Sigmoid colon (tissue), 7 donors: ENCODE measurements at regions of chr6 and their contacts with region 1.

Region 1: GRCh38 chr6:52577022-52577777 is at the start of gene TRAM2:
- DNase-seq: peak; percentile 92
- H3K4me3 ChIP-seq: peak within 1 kb of the TSS; percentile 63 to 91 (median 77)
- H3K27ac ChIP-seq: peak within 1 kb of the TSS; percentile 94 to 98 (median 97)
- H3K4me1 ChIP-seq: peaks cover 0 to 50% (median 44%) of the 10 kb centered on the region in 4 donors
- H3K27me3 ChIP-seq: no peaks in the 10 kb centered on the region
- CTCF ChIP-seq: peak in 1 of 4 experiments; percentile 17
- EP300 ChIP-seq: no peak
- POLR2A ChIP-seq: peak in 1 of 2 donors; percentile 19
- total RNA-seq, gene TRAM2: 9.6 to 15.0 (median 12.4) TPM

Region 2: GRCh38 chr6:52284460-52285176 is 292.6 kb before region 1 on chr6 and contains the start of gene MCM3:
- intact Hi-C with region 1: loop called (anchors 10 kb)
- DNase-seq: peak; percentile 99
- H3K4me3 ChIP-seq: peak within 1 kb of the TSS; percentile 62 to 88 (median 69)
- H3K27ac ChIP-seq: peak within 1 kb of the TSS; percentile 70 to 76 (median 75)
- H3K4me1 ChIP-seq: peaks cover 0 to 17% (median 12%) of the 10 kb centered on the region in 4 donors
- H3K27me3 ChIP-seq: no peaks in the 10 kb centered on the region
- CTCF ChIP-seq: no peak
- EP300 ChIP-seq: no peak
- POLR2A ChIP-seq: no peak
- total RNA-seq, gene MCM3: 31.0 to 36.8 (median 32.8) TPM

Region 3: DNA sequence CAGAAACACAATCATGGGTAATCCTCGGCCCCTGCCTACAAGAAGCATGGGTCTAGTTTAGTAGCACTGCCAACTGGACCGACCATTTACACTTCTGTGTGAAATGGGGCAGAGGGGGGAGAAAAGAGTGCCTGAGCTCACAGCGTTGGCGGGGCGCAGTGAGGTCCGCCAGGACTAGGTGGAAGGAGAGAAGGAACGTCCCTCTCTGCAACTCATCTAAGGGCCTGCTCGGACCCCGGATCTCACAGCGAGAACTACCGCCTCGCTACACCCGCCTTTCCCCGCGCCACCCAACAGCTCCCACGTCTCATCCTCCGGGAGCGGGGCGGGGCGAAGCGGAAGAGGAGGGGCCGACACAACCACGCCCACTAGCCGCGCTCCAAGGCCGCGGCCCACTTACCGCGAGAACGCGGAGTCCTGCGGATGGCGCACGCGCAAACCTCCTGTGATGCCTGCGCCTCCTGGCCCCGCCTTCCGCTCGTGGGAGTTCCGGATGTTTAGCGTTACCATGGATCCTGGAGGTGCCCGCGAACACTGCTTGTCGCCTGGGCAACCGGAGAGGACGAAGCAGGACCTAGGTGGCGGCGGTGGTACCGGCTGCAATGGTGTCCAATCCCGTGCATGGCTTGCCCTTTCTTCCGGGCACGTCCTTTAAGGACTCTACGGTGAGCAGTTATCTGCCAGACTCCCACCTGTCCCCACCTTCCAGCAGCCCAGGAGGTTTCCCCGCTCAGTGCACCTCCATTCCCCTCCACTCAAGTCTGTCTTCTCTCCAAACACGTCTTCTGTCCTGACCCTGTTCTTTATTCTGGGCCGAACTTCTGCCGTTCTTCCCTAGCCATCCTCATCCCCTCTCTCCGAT is 157.2 kb before region 1 on chr6 and contains the start of gene EFHC1:
- intact Hi-C with region 1: loop called (anchors 1 kb)
- DNase-seq: peak; percentile 99
- H3K4me3 ChIP-seq: peak within 1 kb of the TSS; percentile 61 to 97 (median 88)
- H3K27ac ChIP-seq: peak within 1 kb of the TSS; percentile 76 to 88 (median 85)
- H3K4me1 ChIP-seq: peaks cover 0 to 24% (median 14%) of the 10 kb centered on the region in 4 donors
- H3K27me3 ChIP-seq: no peaks in the 10 kb centered on the region
- CTCF ChIP-seq: no peak
- EP300 ChIP-seq: peak in 1 of 4 donors; percentile 34
- POLR2A ChIP-seq: peak; percentile 48 to 60
- total RNA-seq, gene EFHC1: 15.9 to 38.5 (median 19.1) TPM

Region 4: DNA sequence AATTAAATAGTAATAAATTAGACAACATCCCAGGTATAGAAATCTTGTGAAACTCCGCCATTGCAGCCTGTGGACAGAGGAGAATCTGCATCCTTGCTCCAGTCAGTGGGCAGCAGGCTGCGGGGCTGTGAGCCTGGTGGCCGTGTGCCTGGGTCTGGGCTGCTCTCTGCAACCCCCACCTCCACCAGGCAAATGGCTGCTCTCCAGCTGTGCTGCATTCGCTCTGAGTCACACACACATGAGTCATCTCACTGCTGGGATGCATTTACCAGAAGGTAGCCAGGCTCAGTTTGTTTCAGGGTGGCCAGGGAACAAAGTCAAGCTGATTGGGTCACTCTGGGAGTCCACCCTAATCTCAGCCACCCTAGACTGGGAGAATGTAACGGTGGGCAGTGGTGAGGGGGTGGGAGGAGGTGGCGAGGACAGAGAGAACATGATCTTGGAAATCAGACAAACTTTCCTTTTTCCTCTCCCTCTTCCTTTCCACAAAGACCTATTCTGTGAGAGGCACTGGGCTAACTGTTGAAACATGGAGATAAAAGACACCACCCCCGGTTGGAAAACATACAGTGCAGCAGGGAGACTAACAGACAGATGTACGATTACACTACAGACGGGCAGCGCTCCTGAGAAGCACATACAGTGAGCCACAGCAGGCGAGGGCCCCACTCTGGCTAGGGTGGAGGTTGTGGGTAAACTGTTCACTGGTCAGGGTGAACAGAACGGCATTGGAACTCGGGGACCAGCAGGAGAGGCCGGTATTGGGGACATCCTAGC is 59.5 kb before region 1 on chr6:
- intact Hi-C with region 1: loop called (anchors 2 kb)
- DNase-seq: peak; percentile 96
- H3K4me3 ChIP-seq: peak overlapping the region in 1 of 4 donors; percentile 15
- H3K27ac ChIP-seq: peak overlapping the region; percentile 85 to 93 (median 90)
- H3K4me1 ChIP-seq: peaks cover 0 to 81% (median 72%) of the 10 kb centered on the region in 4 donors
- H3K27me3 ChIP-seq: no peaks in the 10 kb centered on the region
- CTCF ChIP-seq: peak in 1 of 4 experiments; percentile 9
- EP300 ChIP-seq: peak in 1 of 4 donors; percentile 65
- POLR2A ChIP-seq: peak in 1 of 2 donors; percentile 32

Region 5: DNA sequence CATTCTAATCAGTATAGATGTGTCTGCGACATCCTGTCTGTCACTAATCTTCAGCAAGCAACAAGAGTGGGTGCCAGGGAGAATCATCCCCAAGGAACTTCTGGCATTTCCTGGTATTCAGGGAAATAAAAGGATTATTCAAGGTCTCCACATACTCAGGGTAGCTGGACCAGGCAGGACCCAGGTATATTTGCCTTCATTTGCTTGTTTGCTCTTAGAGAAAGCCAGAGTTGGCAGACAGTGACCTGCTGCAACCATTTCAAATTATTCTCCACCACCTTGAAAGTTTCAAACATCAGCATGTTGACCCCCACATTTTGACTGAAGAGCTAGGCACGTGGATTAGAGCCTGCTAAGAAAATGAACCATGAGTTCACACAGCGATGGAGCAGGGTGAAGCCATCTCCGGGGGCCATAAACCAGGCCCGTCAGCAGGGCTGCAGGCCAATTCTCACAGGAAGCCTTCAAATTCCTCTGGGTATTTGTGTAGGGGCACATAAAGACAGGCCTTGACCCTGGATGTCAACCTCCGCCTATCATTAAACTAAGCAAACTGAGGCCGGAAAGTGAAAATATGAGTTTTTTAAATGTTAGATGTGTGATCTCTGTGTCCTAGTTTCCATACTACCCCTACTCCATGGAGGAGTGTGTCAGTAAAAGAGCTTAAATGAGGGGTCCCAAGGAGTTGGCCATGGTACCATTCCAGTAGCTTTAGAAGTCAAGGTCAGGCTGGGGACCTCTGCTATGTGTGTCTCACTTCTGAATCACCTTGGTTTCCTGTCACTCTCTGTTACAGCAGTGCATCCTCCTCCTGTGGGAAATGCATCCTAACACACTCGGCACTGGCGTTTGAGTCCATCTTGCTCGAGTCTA is 33.2 kb before region 1 on chr6:
- intact Hi-C with region 1: loop called (anchors 5 kb)
- DNase-seq: no peak
- H3K4me3 ChIP-seq: no peak overlapping the region
- H3K27ac ChIP-seq: peak overlapping the region; percentile 17 to 58 (median 54)
- H3K4me1 ChIP-seq: peaks cover 0 to 94% (median 84%) of the 10 kb centered on the region in 4 donors
- H3K27me3 ChIP-seq: no peaks in the 10 kb centered on the region
- CTCF ChIP-seq: no peak
- EP300 ChIP-seq: no peak
- POLR2A ChIP-seq: no peak

Region 6: DNA sequence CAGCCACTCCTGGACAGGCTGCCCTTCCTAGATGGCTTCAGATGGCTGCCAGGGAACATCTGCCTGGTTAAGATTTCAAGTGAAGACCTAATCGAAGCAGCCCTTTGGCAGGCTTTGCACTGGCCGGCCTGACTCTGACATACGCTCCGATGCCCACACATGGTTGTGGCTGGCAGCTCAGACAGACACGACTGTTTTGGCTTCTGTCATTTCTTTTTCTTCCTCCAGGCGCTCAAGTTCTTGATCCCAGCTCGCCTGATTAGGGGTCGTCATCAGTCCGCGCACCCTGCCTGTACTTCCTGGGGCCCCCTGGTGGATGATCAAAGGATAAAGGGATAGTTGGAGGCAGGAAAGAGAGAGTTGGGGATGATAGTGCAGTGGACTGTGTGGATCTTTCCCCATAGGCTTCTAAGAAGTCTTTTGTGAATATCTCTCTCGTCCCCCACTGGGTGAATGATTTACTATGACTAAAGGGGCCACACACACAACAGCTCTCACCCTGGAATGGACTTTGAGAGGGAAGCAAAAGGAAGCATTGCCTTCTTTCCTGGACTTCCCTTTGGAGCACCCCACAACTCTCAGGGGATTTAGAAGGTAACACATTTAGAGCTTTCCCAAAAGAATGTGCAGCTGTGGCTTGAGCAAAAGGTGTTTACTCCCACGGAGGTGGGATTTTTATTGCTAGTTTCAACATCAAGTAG is 21.1 kb after region 1 on chr6:
- intact Hi-C with region 1: loop called (anchors 2 kb)
- DNase-seq: peak; percentile 84
- H3K4me3 ChIP-seq: peak overlapping the region in 3 of 4 donors; percentile 10 to 36 (median 34)
- H3K27ac ChIP-seq: peak overlapping the region in 3 of 4 donors; percentile 14 to 41 (median 30)
- H3K4me1 ChIP-seq: peaks cover 0 to 40% (median 25%) of the 10 kb centered on the region in 4 donors
- H3K27me3 ChIP-seq: no peaks in the 10 kb centered on the region
- CTCF ChIP-seq: peak; percentile 71 to 79 (median 73)
- EP300 ChIP-seq: no peak
- POLR2A ChIP-seq: no peak

Region 7: DNA sequence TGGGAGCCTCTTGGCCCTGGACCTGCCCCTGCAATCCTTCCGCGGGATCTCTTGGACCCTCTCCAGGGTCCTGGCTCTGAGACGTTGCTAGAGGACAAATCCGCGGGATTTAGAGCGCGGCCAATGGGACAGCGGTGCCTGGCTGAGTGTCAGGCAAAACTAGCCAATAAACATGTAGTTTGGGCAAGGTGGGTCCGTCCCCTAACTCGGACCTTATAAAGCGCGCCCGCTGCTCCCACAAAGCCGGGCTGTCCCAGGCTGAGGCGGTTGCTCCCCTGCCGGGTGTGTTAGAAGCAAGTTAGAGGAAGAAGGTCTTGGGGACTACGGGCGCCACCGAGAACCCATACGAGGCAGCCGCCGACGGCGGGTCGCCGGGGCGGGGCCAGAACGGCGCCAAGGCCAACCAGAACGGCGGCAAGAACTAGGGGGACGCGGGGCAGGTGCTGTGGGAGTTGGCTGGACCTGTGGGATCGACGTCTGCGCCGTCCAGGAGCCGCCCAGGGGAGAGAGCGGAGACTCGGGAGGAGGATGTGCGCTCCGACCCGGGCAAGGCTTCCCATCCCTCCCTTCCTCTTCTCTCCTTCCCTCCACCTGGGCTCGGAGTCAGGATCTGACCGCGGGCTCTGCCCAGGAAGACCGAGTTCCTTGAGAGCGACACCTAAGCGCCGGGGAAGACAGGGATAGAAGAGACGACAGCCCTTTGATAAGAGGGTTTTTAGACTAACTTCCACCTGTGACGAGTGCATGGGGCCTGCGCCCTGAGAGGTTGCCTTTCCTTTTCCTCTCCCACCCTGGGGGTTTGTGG is 87.2 kb after region 1 on chr6:
- intact Hi-C with region 1: loop called (anchors 5 kb)
- DNase-seq: peak; percentile 97
- H3K4me3 ChIP-seq: peak overlapping the region; percentile 61 to 76 (median 66)
- H3K27ac ChIP-seq: peak overlapping the region; percentile 69 to 83 (median 78)
- H3K4me1 ChIP-seq: peaks cover 0 to 17% (median 6%) of the 10 kb centered on the region in 4 donors
- H3K27me3 ChIP-seq: no peaks in the 10 kb centered on the region
- CTCF ChIP-seq: no peak
- EP300 ChIP-seq: no peak
- POLR2A ChIP-seq: peak in 1 of 2 donors; percentile 75

Region 8: DNA sequence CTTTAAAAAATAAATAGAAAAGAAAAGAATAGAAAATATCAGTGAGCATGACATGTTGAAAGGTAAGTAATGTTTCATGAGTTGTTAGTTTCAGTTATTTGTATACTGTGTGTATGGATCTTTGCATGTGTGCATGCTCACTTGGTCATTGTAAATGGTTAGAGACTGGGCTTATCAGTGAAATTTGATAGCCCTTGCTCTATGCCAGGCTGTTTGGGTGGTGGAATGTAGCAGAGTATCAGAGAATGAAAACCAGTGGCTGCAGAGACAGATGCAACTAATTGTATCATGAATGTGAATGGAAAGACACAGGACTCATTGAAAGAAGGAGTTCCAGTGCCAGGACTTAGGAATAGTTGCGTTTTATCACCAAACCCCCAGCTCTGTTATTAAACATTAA is 181.9 kb after region 1 on chr6:
- intact Hi-C with region 1: no loop called
- DNase-seq: no peak
- H3K4me3 ChIP-seq: no peak overlapping the region
- H3K27ac ChIP-seq: no peak overlapping the region
- H3K4me1 ChIP-seq: no peaks in the 10 kb centered on the region
- H3K27me3 ChIP-seq: no peaks in the 10 kb centered on the region
- CTCF ChIP-seq: no peak
- EP300 ChIP-seq: no peak
- POLR2A ChIP-seq: no peak